Endothelial cell of umbilical vein (primary cell): ENCODE measurements at regions of chr11 and their contacts with region 1.

Region 1: DNA sequence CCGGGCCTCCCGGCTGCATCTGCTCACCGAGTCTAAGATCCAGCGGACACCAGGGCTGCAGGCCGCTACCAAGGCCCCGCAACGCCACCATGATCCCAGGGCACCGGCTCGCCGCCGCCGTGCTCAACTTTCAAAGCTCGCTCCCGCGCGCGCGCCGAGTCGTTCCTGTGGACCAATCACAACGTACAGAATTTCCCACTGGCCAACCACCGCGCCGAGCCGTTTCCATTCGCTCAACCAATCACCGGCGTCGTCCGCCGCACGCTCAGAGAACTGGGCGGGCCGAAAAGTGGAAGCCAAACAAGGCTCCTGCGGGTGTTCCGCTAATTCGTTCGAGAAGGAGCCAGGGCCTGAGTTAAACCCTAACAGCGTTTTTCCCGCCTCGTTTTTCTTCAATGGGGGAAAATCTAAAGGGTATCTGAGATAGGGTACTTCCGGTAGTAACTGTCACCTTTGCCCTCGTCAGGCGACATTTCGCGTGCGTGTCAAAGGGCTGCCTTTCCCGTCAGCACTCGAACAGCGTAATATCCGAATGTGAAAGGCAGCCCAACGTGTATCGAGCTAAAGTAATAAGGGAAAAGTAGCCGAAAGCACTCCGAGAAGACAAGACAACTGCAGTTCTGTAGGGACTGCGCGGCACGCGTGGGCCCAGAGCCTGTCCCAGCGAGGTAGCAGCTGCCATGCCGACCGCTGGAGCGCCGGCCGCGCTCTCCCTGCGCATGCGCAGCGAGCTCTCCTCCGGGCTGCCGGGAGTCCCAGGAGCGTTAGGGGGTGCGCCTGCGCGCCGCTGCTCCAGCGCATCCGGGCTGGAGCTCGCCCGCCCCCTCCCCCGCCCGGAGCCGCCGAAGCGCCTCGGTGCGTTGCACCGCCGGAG is at the starts of genes NCAPD3 and VPS26B:
- DNase-seq: peak; percentile 97
- H3K4me3 ChIP-seq: peak within 1 kb of the TSS; percentile 43 to 73 (median 59)
- H3K27ac ChIP-seq: peak within 1 kb of the TSS; percentile 30
- H3K4me1 ChIP-seq: peaks cover 25% of the 10 kb centered on the region
- H3K27me3 ChIP-seq: no peaks in the 10 kb centered on the region
- CTCF ChIP-seq: no peak
- POLR2A ChIP-seq: peak; percentile 95
- total RNA-seq, gene NCAPD3: 42.6 and 43.8 TPM in 2 replicates
- total RNA-seq, gene VPS26B: 41.6 and 53.1 TPM in 2 replicates

Region 2: DNA sequence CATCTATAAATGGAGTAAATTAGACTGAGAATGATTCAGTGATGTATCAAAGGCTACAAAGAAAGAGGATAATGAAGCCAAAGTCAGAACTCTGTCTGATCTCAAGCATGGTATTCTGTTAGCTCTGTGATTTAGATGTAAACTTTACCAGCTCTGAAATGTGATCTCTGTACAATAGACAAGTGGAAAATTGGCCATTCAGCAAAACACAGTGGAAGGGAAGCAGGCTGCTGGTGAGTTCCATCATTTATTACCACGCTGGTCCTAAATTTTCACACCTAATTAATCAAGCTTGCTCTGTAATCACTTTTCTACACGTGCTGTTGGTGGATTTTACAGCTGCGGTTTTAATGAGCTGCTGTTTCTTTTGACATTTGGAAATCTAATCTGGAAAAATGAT is 546.7 kb before region 1 on chr11:
- CTCF ChIA-PET with region 1: no interaction called
- POLR2A ChIA-PET with region 1: no interaction called
- dilution Hi-C with region 1: no loop called
- intact Hi-C with region 1: no loop called
- DNase-seq: no peak
- H3K4me3 ChIP-seq: no peak overlapping the region
- H3K27ac ChIP-seq: no peak overlapping the region
- H3K4me1 ChIP-seq: no peaks in the 10 kb centered on the region
- H3K27me3 ChIP-seq: no peaks in the 10 kb centered on the region
- CTCF ChIP-seq: no peak
- POLR2A ChIP-seq: no peak

Region 3: GRCh38 chr11:134068829-134069425 is 155.1 kb before region 1 on chr11 and contains the start of gene JAM3:
- CTCF ChIA-PET with region 1: no interaction called
- POLR2A ChIA-PET with region 1: no interaction called
- dilution Hi-C with region 1: no loop called
- intact Hi-C with region 1: loop called (anchors 5 kb)
- DNase-seq: peak; percentile 97
- H3K4me3 ChIP-seq: peak within 1 kb of the TSS; percentile 65 to 89 (median 77)
- H3K27ac ChIP-seq: peak within 1 kb of the TSS; percentile 42
- H3K4me1 ChIP-seq: peaks cover 14% of the 10 kb centered on the region
- H3K27me3 ChIP-seq: peaks cover 2 to 8% of the 10 kb centered on the region in 2 experiments
- CTCF ChIP-seq: no peak
- POLR2A ChIP-seq: peak; percentile 91
- total RNA-seq, gene JAM3: 106 and 137 TPM in 2 replicates

Region 4: DNA sequence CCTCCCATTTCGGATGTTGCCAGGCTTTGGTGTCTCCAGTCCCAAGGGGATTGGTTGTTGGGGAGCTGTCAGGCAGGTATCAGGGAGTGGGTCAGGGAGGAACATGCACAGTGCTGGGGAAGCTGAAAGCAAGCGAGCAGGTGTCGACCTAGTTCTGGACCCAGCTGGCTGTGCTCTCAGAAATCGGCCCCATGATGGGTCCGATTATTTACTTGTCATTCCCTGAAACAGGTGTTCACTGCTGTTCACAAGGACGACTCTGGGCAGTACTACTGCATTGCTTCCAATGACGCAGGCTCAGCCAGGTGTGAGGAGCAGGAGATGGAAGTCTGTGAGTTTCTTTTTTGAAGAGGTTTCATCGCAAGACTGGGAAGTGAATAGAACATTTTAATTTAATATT is 78.4 kb before region 1 on chr11:
- CTCF ChIA-PET with region 1: no interaction called
- POLR2A ChIA-PET with region 1: no interaction called
- dilution Hi-C with region 1: no loop called
- intact Hi-C with region 1: loop called (anchors 5 kb)
- DNase-seq: no peak
- H3K4me3 ChIP-seq: no peak overlapping the region
- H3K27ac ChIP-seq: no peak overlapping the region
- H3K4me1 ChIP-seq: no peaks in the 10 kb centered on the region
- H3K27me3 ChIP-seq: no peaks in the 10 kb centered on the region
- CTCF ChIP-seq: no peak
- POLR2A ChIP-seq: no peak

Region 5: DNA sequence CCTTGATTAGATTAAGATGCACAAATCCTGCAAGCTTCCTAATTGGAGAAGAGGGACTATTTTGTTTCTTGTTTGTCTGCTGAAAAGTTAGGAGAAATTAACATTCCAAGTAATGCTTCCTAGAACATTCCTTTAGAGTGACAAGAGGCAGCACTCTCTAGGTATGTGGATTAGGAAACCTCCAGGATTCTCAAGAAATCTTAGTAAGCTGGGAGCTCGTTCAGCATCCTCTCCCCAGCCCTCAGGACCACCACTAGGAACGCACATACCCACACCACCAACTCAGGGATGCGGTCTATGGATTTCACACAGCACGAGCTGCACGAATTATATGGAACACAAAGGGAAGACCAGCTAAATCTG is 53.2 kb before region 1 on chr11:
- CTCF ChIA-PET with region 1: no interaction called
- POLR2A ChIA-PET with region 1: no interaction called
- dilution Hi-C with region 1: no loop called
- intact Hi-C with region 1: no loop called
- DNase-seq: no peak
- H3K4me3 ChIP-seq: no peak overlapping the region
- H3K27ac ChIP-seq: no peak overlapping the region
- H3K4me1 ChIP-seq: no peaks in the 10 kb centered on the region
- H3K27me3 ChIP-seq: no peaks in the 10 kb centered on the region
- CTCF ChIP-seq: no peak
- POLR2A ChIP-seq: no peak

Region 6: GRCh38 chr11:134244655-134245054 is 20.6 kb after region 1 on chr11:
- CTCF ChIA-PET with region 1: interaction called, 21 read pairs
- POLR2A ChIA-PET with region 1: no interaction called
- dilution Hi-C with region 1: no loop called
- intact Hi-C with region 1: no loop called
- DNase-seq: peak; percentile 36
- H3K4me3 ChIP-seq: no peak overlapping the region
- H3K27ac ChIP-seq: no peak overlapping the region
- H3K4me1 ChIP-seq: no peaks in the 10 kb centered on the region
- H3K27me3 ChIP-seq: no peaks in the 10 kb centered on the region
- CTCF ChIP-seq: peak; percentile 39 to 63
- POLR2A ChIP-seq: no peak